ENCODE measurements at regions of chr17 and their contacts with region 1.

Region 1: DNA sequence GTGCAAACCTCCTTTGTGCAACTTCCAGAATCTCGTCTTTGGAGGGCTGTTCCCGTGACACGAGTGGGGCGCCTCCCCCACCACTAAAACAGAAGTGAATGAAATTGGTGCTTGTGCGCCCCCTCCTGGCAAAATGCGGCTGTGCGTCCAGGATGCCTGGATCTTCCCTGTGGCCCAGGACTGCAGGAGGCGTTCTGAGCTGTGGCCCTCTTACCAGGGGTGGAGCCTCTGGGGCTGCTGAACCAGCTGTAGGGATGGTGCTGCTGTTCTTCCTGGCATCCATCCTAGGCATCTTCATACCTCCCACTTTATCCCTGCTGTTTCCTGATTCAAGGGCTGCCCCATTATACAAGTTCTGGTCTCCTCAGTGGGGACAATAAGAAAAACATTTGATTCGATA is 18.5 kb upstream of the NAGLU start:
- DNase-seq: peak; percentile 98
- H3K4me3 ChIP-seq: no peak overlapping the region
- H3K27ac ChIP-seq: peak overlapping the region; percentile 94 to 98 (median 96)
- H3K4me1 ChIP-seq: peaks cover 76 to 94% (median 84%) of the 10 kb centered on the region in 4 donors
- H3K27me3 ChIP-seq: no peaks in the 10 kb centered on the region
- CTCF ChIP-seq: peak in 2 of 3 experiments; percentile 98 to 99
- EP300 ChIP-seq: no peak
- POLR2A ChIP-seq: no peak

Region 2: DNA sequence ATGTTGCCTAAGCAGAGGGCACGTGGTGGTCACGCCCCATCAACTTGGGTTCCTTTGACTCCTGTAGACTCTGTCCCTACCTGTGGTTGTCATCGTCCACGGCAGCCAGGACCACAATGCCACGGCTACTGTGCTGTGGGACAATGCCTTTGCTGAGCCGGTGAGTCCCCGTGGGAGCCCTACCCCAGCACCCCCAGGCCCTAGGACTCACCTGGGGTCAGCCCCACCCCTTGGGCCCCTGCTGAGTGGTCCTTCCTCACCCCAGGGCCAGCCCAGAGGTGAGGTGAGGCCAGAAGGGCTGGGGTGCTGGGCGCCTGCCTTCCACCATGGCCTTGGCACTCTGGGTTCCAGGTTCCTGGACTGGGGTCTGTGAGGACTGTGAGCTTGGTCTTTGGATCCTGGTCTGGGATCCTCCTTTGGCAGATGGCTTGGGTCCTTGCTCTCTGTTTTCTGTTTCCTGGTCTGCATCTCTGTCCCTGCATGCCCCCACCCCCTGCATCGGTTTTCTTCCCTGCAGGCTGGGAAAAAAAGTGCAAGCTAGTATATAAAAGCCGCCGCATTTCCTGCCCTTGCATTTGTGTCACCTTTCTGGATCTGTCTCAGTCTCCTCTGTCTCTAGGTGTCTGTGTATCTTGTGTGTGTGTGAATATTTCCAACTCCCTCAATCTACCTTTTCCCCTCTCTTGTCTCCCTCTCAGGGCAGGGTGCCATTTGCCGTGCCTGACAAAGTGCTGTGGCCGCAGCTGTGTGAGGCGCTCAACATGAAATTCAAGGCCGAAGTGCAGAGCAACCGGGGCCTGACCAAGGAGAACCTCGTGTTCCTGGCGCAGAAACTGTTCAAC is 211.8 kb before region 1 on chr17:
- intact Hi-C with region 1: no loop called
- DNase-seq: no peak
- H3K4me3 ChIP-seq: no peak overlapping the region
- H3K27ac ChIP-seq: no peak overlapping the region
- H3K4me1 ChIP-seq: peaks cover 0 to 19% (median 18%) of the 10 kb centered on the region in 4 donors
- H3K27me3 ChIP-seq: no peaks in the 10 kb centered on the region
- CTCF ChIP-seq: no peak
- EP300 ChIP-seq: no peak
- POLR2A ChIP-seq: no peak

Region 3: DNA sequence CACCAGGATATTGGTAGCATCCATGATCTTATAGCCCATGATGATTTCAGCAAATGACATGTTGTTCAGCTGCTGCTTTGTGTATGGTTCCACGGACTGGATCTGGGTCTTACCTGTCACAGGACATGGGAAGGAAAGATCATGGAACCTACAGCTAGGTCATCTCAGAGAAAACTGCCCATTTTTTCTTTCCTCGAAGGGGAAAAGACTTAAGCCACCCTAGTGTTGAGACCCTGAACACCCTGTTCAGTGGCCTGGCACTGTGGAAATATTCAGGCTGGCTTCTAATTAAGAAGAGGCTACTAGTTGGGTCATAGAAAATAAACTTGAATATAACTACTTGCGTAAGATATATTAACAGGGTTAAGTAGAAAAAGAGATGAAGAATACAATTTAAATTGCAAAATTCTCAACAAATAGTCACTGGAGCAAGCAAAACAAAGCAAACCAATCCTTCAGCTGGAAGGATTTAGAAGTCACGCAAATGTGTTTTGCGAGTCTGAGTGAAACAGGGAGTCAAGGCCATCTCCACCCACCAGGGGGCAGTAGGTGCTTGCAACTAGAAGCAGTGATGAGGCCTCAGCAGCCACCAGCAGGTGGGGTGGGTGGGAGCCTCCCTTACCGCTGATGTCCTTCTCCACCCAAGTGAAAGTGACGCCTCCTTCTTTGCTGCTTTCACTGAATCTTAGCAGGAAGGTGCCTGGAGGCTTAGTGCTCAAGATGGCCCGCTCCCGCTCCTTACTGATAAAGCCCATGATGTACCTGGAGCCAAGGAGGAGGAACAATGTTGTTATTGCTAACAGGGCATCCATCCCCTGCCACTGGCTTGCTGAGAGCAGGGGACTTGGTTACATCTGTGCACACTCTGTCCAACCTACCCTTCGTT is 194.9 kb before region 1 on chr17:
- intact Hi-C with region 1: loop called (anchors 5 kb)
- DNase-seq: peak; percentile 99
- H3K4me3 ChIP-seq: no peak overlapping the region
- H3K27ac ChIP-seq: peak overlapping the region; percentile 29 to 62 (median 55)
- H3K4me1 ChIP-seq: peaks cover 19 to 44% (median 26%) of the 10 kb centered on the region in 4 donors
- H3K27me3 ChIP-seq: no peaks in the 10 kb centered on the region
- CTCF ChIP-seq: peak; percentile 98 to 100 (median 99)
- EP300 ChIP-seq: no peak
- POLR2A ChIP-seq: no peak

Region 4: DNA sequence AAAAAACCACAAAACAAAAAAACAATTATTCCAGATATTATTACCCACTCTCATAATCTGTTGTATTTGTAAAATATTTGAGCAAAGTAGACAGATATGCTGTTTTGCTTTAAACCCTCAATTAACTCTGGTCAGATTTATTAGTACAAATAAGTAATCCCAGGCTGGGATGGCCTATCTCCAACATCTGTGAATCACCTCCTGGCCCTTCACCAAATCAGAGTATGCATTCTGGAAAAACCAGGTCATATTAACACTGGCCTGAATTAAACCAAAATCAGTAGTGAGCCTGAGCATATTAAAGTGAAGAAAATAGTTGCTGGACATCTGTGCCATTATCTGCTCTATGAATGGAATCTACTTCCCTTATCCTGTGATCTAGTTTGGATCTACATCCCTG is 170.3 kb before region 1 on chr17:
- intact Hi-C with region 1: no loop called
- DNase-seq: no peak
- H3K4me3 ChIP-seq: no peak overlapping the region
- H3K27ac ChIP-seq: peak overlapping the region; percentile 49 to 74 (median 70)
- H3K4me1 ChIP-seq: peaks cover 38 to 55% (median 54%) of the 10 kb centered on the region in 4 donors
- H3K27me3 ChIP-seq: no peaks in the 10 kb centered on the region
- CTCF ChIP-seq: no peak
- EP300 ChIP-seq: no peak
- POLR2A ChIP-seq: no peak

Region 5: GRCh38 chr17:42428141-42428944 is 89.2 kb before region 1 on chr17:
- intact Hi-C with region 1: loop called (anchors 5 kb)
- DNase-seq: no peak
- H3K4me3 ChIP-seq: no peak overlapping the region
- H3K27ac ChIP-seq: peak overlapping the region; percentile 64 to 79 (median 70)
- H3K4me1 ChIP-seq: peaks cover 20 to 62% (median 56%) of the 10 kb centered on the region in 4 donors
- H3K27me3 ChIP-seq: no peaks in the 10 kb centered on the region
- CTCF ChIP-seq: peak; percentile 66 to 80 (median 80)
- EP300 ChIP-seq: no peak
- POLR2A ChIP-seq: no peak

Measured in esophagus muscularis mucosa (tissue), 4 donors.